Activated CD8-positive, alpha-beta memory T cell treated with anti-CD3 and anti-CD28 coated beads, Interleukin-2, amount 10 ng/mL, durations not matched to agents 7 days and 5 days (primary cell): ENCODE measurements at regions of chr1 and their contacts with region 1.

Region 1: GRCh38 chr1:91165033-91165654 is 143.3 kb upstream of the ZNF644 start:
- DNase-seq: peak; percentile 76
- ATAC-seq: peak; percentile 94
- H3K4me3 Mint-ChIP-seq: no peak overlapping the region
- H3K27ac Mint-ChIP-seq: no peak overlapping the region
- H3K4me1 Mint-ChIP-seq: no peaks in the 10 kb centered on the region
- H3K27me3 Mint-ChIP-seq: no peaks in the 10 kb centered on the region

Region 2: GRCh38 chr1:90721210-90722194 is 443.6 kb before region 1 on chr1:
- CTCF ChIA-PET with region 1: interaction called, 35 read pairs
- DNase-seq: peak; percentile 71
- ATAC-seq: no peak
- H3K4me3 Mint-ChIP-seq: no peak overlapping the region
- H3K27ac Mint-ChIP-seq: peak overlapping the region; percentile 41
- H3K4me1 Mint-ChIP-seq: peaks cover 26% of the 10 kb centered on the region
- H3K27me3 Mint-ChIP-seq: peaks cover 93% of the 10 kb centered on the region

Region 3: DNA sequence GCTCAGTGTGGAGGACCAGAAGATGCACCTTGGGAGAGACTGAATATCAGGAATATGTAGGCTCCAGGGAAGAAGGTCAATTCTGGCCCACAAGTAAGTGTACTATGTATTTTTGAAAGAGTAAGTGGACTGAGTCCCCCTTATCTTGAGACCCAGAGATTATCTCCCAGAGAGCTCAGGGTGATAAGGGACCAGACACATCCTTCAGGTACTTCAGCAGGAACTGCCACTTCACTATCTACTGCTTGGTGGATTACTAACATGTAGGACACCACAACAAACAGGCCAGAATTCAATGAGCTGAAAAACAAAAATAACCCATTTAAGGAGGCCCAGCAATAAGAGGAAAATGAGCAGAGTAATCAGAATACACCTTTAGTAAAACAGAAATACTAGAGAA is 262.5 kb before region 1 on chr1:
- CTCF ChIA-PET with region 1: no interaction called
- DNase-seq: no peak
- ATAC-seq: no peak
- H3K4me3 Mint-ChIP-seq: no peak overlapping the region
- H3K27ac Mint-ChIP-seq: no peak overlapping the region
- H3K4me1 Mint-ChIP-seq: no peaks in the 10 kb centered on the region
- H3K27me3 Mint-ChIP-seq: no peaks in the 10 kb centered on the region

Region 4: DNA sequence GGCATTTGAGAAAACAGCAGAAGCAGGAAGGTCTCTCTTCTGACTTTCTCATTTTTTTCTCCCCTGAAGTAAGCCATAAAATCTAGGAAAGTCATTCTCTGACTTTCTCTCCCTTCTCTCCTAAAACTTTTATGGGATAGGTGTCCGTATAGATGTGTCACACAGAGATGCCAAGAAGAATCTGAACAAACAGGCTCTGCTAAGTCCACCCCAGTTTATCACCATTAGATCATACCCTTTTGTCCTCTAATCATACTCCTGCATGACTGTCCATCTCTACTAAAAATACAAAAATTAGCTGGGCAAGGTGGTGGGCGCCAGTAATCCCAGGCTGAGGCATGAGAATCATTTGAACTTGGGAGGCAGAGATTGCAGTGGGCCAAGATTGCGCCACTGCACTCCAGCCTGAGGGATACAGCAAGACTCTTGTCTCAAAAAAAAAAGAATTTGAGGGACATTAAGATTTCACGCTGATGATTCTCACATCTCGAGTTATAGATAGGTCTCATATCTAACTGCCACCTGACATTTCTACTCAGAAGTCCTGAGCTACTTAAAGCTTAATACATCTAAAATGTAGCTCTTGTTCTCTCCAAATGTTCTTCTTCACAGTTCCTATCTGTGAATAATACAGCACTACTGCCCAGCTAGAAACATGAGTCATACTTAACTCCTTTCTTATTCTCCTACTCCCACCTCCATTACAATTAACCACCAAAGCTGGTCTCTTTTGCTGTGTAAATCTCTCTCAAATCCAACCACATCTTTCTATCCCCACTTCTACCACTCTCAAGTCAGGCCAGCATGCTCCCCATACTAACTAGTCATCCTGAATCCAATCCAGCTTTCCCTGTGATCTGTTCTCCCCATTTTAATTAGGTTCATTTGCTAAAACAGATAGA is 191.0 kb before region 1 on chr1:
- CTCF ChIA-PET with region 1: no interaction called
- DNase-seq: no peak
- ATAC-seq: no peak
- H3K4me3 Mint-ChIP-seq: no peak overlapping the region
- H3K27ac Mint-ChIP-seq: no peak overlapping the region
- H3K4me1 Mint-ChIP-seq: peaks cover 13% of the 10 kb centered on the region
- H3K27me3 Mint-ChIP-seq: no peaks in the 10 kb centered on the region

Region 5: DNA sequence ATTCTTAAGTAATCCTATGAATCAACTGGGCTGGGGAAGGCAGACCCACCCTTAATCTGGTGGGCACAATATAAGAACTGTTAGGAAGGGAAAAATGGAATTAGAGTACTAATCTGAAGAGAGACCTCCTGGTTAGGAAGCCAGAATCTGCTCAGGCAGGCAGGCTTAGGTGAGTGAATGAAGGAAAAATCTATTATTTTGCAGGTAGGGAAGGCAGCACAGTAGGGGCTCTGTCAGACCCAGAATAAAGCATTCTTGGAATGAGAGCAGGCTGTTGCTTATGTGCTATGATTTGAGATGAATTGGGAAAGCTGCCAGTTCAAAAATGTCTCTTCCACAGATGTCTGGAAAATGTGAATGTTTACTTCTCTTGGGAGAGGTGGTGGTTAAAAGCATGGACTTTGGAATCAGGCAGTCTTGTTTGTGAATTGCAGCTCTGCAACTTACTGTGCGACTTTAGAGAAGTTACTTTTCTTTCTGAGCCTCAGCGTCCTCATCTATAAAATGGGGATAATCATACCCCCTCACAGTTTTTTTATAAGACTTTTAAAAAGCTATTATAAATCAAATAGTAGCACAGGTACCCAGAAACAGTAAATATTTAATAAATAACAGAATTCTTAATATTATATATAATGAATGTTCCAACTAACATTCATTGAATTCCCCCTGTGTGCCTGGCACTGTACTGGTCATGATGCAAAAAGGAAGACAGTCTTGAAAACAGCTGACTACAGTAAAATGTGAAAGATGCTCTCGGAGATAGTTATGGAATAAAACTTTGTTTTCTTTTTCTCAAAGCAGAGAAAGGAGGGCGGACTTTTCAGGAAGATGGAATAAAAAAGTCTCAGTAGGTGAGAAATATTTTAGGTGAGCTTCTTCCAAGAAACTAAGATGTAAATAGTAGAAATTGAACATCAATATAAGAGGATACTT is 128.0 kb before region 1 on chr1:
- CTCF ChIA-PET with region 1: no interaction called
- DNase-seq: no peak
- ATAC-seq: no peak
- H3K4me3 Mint-ChIP-seq: no peak overlapping the region
- H3K27ac Mint-ChIP-seq: no peak overlapping the region
- H3K4me1 Mint-ChIP-seq: no peaks in the 10 kb centered on the region
- H3K27me3 Mint-ChIP-seq: peaks cover 19% of the 10 kb centered on the region

Region 6: GRCh38 chr1:91153341-91153740 is 11.8 kb before region 1 on chr1:
- CTCF ChIA-PET with region 1: interaction called, 25 read pairs
- DNase-seq: no peak
- ATAC-seq: no peak
- H3K4me3 Mint-ChIP-seq: no peak overlapping the region
- H3K27ac Mint-ChIP-seq: no peak overlapping the region
- H3K4me1 Mint-ChIP-seq: no peaks in the 10 kb centered on the region
- H3K27me3 Mint-ChIP-seq: peaks cover 5% of the 10 kb centered on the region

Region 7: GRCh38 chr1:91278754-91279153 is 113.6 kb after region 1 on chr1:
- CTCF ChIA-PET with region 1: interaction called, 30 read pairs
- DNase-seq: no peak
- ATAC-seq: no peak
- H3K4me3 Mint-ChIP-seq: no peak overlapping the region
- H3K27ac Mint-ChIP-seq: no peak overlapping the region
- H3K4me1 Mint-ChIP-seq: no peaks in the 10 kb centered on the region
- H3K27me3 Mint-ChIP-seq: peaks cover 16% of the 10 kb centered on the region

Region 8: DNA sequence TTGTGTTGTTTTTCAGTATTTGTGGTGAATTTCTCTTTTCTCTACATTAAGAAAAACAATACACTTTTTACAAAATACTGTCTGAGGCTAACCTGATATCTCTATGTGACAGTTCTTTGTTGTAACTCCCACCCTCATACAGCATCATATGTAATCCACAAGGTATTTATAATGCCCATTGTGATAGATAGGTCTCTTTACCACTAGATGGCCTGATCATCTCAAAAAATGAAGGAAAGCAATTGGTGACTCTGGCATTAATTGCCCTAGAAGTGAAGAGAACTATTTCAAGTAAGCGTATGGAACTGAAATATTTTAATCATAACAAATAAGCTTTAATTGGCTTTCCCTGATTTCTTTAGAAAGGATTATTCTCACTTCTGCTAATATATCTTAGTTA is 275.7 kb after region 1 on chr1:
- CTCF ChIA-PET with region 1: no interaction called
- DNase-seq: no peak
- ATAC-seq: no peak
- H3K4me3 Mint-ChIP-seq: no peak overlapping the region
- H3K27ac Mint-ChIP-seq: no peak overlapping the region
- H3K4me1 Mint-ChIP-seq: no peaks in the 10 kb centered on the region
- H3K27me3 Mint-ChIP-seq: peaks cover 33% of the 10 kb centered on the region

Region 9: GRCh38 chr1:91924146-91924545 is 759.0 kb after region 1 on chr1:
- CTCF ChIA-PET with region 1: interaction called, 10 read pairs
- DNase-seq: no peak
- ATAC-seq: no peak
- H3K4me3 Mint-ChIP-seq: no peak overlapping the region
- H3K27ac Mint-ChIP-seq: no peak overlapping the region
- H3K4me1 Mint-ChIP-seq: peaks cover 10% of the 10 kb centered on the region
- H3K27me3 Mint-ChIP-seq: peaks cover 3% of the 10 kb centered on the region